ENCODE measurements at regions of chr17 and their contacts with region 1.

Region 1: DNA sequence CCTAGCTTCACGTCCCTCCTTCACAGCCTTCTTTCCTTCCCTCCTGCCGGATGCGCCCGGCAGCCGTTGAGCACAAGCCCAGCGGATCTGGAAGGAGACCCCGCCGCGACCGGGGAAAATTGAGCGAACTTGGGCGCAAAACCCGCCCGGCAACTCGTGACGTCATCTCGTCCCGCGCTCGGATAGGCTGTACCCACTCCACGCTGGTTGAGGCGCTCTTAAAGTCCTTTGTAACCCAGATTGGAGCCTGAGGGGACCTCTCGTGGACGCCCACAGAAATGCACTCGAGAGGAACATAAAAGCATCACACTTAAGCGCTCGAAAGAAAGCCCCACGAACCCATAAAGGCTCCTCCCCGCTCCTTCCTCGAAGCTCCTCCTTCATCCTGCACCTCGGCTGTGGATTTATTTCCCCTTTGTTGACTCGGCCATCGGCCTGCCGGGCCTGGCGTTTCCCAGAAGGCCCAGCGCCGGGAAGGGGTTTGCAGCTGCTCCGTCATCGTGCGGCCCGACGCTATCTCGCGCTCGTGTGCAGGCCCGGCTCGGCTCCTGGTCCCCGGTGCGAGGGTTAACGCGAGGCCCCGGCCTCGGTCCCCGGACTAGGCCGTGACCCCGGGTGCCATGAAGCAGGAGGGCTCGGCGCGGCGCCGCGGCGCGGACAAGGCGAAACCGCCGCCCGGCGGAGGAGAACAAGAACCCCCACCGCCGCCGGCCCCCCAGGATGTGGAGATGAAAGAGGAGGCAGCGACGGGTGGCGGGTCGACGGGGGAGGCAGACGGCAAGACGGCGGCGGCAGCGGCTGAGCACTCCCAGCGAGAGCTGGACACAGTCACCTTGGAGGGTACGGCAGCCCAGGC is at the start of gene PSMD3:
- DNase-seq: peak; percentile 97 to 98
- H3K4me3 ChIP-seq: peak within 1 kb of the TSS; percentile 100
- H3K27ac ChIP-seq: peak within 1 kb of the TSS; percentile 57
- H3K4me1 ChIP-seq: peaks cover 15% of the 10 kb centered on the region
- H3K27me3 ChIP-seq: no peaks in the 10 kb centered on the region
- CTCF ChIP-seq: peak; percentile 69
- total RNA-seq, gene PSMD3: 93.2 and 130 TPM in 2 replicates

Region 2: GRCh38 chr17:39547713-39548478 is 432.7 kb before region 1 on chr17:
- CTCF ChIA-PET with region 1: no interaction called
- POLR2A ChIA-PET with region 1: no interaction called
- intact Hi-C with region 1: loop called (anchors 10 kb)
- DNase-seq: peak; percentile 49 to 67
- H3K4me3 ChIP-seq: no peak overlapping the region
- H3K27ac ChIP-seq: no peak overlapping the region
- H3K4me1 ChIP-seq: no peaks in the 10 kb centered on the region
- H3K27me3 ChIP-seq: no peaks in the 10 kb centered on the region
- CTCF ChIP-seq: peak; percentile 98

Region 3: DNA sequence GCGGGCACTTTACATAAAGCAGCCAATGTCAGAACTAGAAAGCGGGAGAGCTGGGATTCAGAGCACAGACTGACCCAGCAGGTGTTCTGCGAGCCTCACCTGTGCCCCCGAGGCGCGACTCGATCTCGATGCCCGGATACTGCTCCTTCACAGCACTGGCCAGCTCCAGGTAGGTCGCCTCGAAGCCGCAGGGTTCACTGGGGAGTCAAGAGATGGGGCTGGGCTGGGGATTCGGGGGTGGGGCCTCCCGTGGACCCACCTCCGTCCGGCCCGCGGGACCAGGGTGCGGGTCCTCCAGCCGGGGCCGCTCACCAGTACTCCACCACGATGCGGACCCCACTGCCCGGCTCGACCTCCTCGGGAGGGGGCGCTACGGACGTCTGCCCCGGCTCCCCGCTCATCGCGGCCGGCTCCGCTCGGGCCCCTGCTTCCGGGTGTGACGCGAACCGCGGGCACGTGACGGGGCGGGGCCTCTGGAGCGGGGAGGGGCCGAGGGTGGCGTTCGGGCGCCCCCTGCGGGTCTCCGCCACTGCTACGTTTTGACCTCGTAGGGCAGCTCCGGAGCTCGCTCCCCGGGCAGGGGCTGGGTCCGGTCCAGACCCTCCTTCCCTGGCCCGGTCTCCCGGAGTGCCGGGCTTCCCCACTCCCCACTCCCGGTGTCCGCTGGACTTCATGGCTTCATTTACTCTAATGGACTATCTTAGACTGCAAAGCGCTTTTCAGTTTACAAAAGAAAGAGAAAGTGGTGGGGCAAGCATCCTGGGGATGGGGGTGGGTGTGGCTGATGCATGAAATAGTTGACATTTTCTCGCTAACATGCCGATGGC is 250.3 kb before region 1 on chr17 and contains the start of gene MIEN1:
- CTCF ChIA-PET with region 1: no interaction called
- POLR2A ChIA-PET with region 1: no interaction called
- intact Hi-C with region 1: loop called (anchors 1 kb)
- DNase-seq: peak; percentile 71 to 95
- H3K4me3 ChIP-seq: peak within 1 kb of the TSS; percentile 76
- H3K27ac ChIP-seq: peak within 1 kb of the TSS; percentile 69
- H3K4me1 ChIP-seq: peaks cover 24% of the 10 kb centered on the region
- H3K27me3 ChIP-seq: no peaks in the 10 kb centered on the region
- CTCF ChIP-seq: peak; percentile 88
- total RNA-seq, gene MIEN1: 49.2 and 50.8 TPM in 2 replicates

Region 4: GRCh38 chr17:39927101-39927928 is 53.3 kb before region 1 on chr17 and contains the starts of genes LRRC3C and ORMDL3:
- CTCF ChIA-PET with region 1: no interaction called
- POLR2A ChIA-PET with region 1: no interaction called
- intact Hi-C with region 1: loop called (anchors 1 kb)
- DNase-seq: peak; percentile 77 to 88
- H3K4me3 ChIP-seq: peak within 1 kb of the TSS; percentile 98
- H3K27ac ChIP-seq: peak within 1 kb of the TSS; percentile 89
- H3K4me1 ChIP-seq: peaks cover 35% of the 10 kb centered on the region
- H3K27me3 ChIP-seq: no peaks in the 10 kb centered on the region
- CTCF ChIP-seq: no peak
- total RNA-seq, gene LRRC3C: not detected in 2 replicates
- total RNA-seq, gene ORMDL3: 51.1 and 68.1 TPM in 2 replicates

Region 5: GRCh38 chr17:39952680-39953470 is 27.7 kb before region 1 on chr17:
- CTCF ChIA-PET with region 1: no interaction called
- POLR2A ChIA-PET with region 1: interaction called, 15 read pairs
- intact Hi-C with region 1: no loop called
- DNase-seq: peak; percentile 80 to 88
- H3K4me3 ChIP-seq: peak overlapping the region; percentile 41; the same call in 1 of the 2 replicates
- H3K27ac ChIP-seq: no peak overlapping the region
- H3K4me1 ChIP-seq: peaks cover 20% of the 10 kb centered on the region
- H3K27me3 ChIP-seq: no peaks in the 10 kb centered on the region
- CTCF ChIP-seq: no peak

Region 6: DNA sequence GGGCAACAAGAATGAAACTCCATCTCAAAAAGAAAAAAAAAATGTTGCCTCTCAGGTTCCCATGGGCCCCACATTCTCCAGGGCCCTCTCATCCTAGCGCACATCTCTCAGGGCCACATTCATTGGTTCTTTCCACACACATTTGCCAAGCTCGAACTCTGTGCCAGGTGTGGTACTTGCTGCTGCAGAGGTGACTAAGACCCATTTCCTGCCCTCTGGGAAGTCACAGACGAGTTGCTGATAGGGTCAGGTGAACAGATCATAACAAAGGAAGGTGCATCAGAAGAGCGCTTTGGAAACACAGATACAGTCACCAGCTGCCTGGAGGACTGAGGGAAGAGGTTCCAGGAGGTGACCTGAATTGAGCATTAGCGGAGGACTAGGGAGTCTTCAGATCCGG is 16.8 kb before region 1 on chr17:
- CTCF ChIA-PET with region 1: interaction called, 5 read pairs
- POLR2A ChIA-PET with region 1: interaction called, 4 read pairs
- intact Hi-C with region 1: loop called (anchors 1 kb)
- DNase-seq: peak; percentile 39 to 87
- H3K4me3 ChIP-seq: no peak overlapping the region
- H3K27ac ChIP-seq: no peak overlapping the region
- H3K4me1 ChIP-seq: peaks cover 11% of the 10 kb centered on the region
- H3K27me3 ChIP-seq: no peaks in the 10 kb centered on the region
- CTCF ChIP-seq: no peak

Region 7: GRCh38 chr17:40026816-40027613 is 46.4 kb after region 1 on chr17:
- CTCF ChIA-PET with region 1: interaction called, 6 read pairs
- POLR2A ChIA-PET with region 1: no interaction called
- intact Hi-C with region 1: loop called (anchors 2 kb)
- DNase-seq: peak; percentile 49 to 71
- H3K4me3 ChIP-seq: no peak overlapping the region
- H3K27ac ChIP-seq: peak overlapping the region; percentile 70
- H3K4me1 ChIP-seq: peaks cover 52% of the 10 kb centered on the region
- H3K27me3 ChIP-seq: no peaks in the 10 kb centered on the region
- CTCF ChIP-seq: peak; percentile 91

Measured in PC-9 (cell line).